ENCODE measurements at regions of chrX and their contacts with region 1.

Region 1: DNA sequence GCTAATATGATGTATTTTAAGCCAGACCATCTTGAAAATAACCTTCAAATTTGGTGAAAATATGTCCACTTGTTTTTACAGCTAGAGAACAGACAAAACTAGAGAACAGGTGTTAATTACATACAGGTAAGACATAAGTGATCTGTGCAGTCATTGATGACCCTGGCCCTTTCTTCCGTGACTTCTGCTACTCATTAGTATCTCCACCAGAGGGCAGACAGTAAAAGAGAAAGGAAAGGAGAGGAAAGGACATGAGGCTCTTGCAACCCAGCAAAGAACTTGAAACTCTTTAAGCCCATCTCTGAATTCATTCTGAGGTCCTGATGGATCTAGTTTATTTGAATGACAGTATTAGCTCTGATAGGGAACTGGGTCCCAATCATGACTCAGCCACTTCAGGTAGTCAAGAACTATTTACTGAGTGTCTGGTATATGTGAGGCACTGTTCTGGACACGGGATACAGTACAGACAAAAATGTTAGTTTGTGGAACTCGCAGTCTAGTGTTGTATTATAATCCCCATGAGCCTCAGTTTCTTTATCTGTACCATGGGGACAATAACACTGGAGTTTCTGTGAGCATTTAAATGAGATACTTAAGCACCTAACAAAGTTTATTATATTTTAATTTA is 121.0 kb upstream of the TEX13D start:
- DNase-seq: peak in 3 of 9 experiments; percentile 18 to 69 (median 55)
- ATAC-seq: peak; percentile 80
- H3K4me3 ChIP-seq: no peak overlapping the region
- H3K4me3 Mint-ChIP-seq: no peak overlapping the region
- H3K27ac ChIP-seq: no peak overlapping the region
- H3K27ac Mint-ChIP-seq: no peak overlapping the region
- H3K4me1 ChIP-seq: peaks cover 20% of the 10 kb centered on the region
- H3K4me1 Mint-ChIP-seq: peaks cover 42% of the 10 kb centered on the region
- H3K27me3 ChIP-seq: no peaks in the 10 kb centered on the region
- H3K27me3 Mint-ChIP-seq: no peaks in the 10 kb centered on the region
- CTCF ChIP-seq: peak; percentile 60

Region 2: GRCh38 chrX:124098089-124098488 is 113.3 kb before region 1 on chrX:
- CTCF ChIA-PET with region 1: no interaction called
- POLR2A ChIA-PET with region 1: no interaction called
- intact Hi-C with region 1: loop called in 1 of 2 experiments (anchors 10 kb)
- DNase-seq: peak in 2 of 9 experiments; percentile 35 to 53
- ATAC-seq: peak; percentile 46
- H3K4me3 ChIP-seq: no peak overlapping the region
- H3K4me3 Mint-ChIP-seq: no peak overlapping the region
- H3K27ac ChIP-seq: no peak overlapping the region
- H3K27ac Mint-ChIP-seq: no peak overlapping the region
- H3K4me1 ChIP-seq: no peaks in the 10 kb centered on the region
- H3K4me1 Mint-ChIP-seq: no peaks in the 10 kb centered on the region
- H3K27me3 ChIP-seq: no peaks in the 10 kb centered on the region
- H3K27me3 Mint-ChIP-seq: no peaks in the 10 kb centered on the region
- CTCF ChIP-seq: peak; percentile 60

Region 3: GRCh38 chrX:124239911-124240310 is 28.5 kb after region 1 on chrX:
- CTCF ChIA-PET with region 1: interaction called, 4 read pairs
- POLR2A ChIA-PET with region 1: no interaction called
- intact Hi-C with region 1: loop called in 1 of 2 experiments (anchors 1 kb)
- DNase-seq: peak in 3 of 9 experiments; percentile 27 to 75 (median 62)
- ATAC-seq: peak; percentile 72
- H3K4me3 ChIP-seq: peak overlapping the region in 1 of 2 experiments; percentile 9
- H3K4me3 Mint-ChIP-seq: peak overlapping the region; percentile 68
- H3K27ac ChIP-seq: peak overlapping the region in 1 of 2 experiments; percentile 56
- H3K27ac Mint-ChIP-seq: peak overlapping the region; percentile 77
- H3K4me1 ChIP-seq: peaks cover 6% of the 10 kb centered on the region
- H3K4me1 Mint-ChIP-seq: peaks cover 34% of the 10 kb centered on the region
- H3K27me3 ChIP-seq: no peaks in the 10 kb centered on the region
- H3K27me3 Mint-ChIP-seq: no peaks in the 10 kb centered on the region
- CTCF ChIP-seq: no peak

Region 4: DNA sequence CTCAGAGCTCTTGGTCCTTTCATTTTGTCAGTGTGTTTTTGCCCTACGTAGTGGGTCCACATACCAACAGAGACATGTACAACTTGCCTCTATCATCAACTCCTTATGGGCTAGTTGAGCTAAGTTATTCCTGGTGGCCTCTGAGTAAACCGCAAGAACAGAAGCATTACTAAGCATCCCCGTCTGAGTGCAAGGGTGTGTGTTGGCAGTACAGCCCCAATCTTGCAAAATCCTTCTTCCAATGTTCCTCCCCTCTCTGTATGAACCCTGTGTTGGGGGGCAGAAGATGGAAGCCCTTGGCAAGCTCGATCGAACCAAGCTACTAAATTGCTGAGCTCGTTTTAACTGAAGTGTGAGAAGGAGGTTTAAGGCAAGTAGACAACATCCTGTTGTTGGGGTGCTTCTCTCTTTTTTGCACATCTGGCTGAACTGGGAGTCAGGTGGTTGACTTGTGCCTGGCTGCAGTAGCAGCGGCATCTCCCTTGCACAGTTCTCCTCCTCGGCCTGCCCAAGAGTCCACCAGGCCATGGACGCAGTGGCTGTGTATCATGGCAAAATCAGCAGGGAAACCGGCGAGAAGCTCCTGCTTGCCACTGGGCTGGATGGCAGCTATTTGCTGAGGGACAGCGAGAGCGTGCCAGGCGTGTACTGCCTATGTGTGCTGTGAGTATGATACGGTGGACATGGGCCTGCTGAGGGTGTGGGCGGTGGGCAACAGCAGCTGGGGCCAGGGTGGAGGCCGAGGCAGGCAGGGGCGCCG is 134.9 kb after region 1 on chrX and contains the start of gene SH2D1A:
- CTCF ChIA-PET with region 1: interaction called, 3 read pairs
- POLR2A ChIA-PET with region 1: interaction called, 16 read pairs
- intact Hi-C with region 1: loop called in 1 of 2 experiments (anchors 5 kb)
- DNase-seq: peak in 7 of 9 experiments; percentile 7 to 74 (median 32)
- ATAC-seq: peak; percentile 35
- H3K4me3 ChIP-seq: peak within 1 kb of the TSS; percentile 61 to 62
- H3K4me3 Mint-ChIP-seq: peak within 1 kb of the TSS; percentile 96
- H3K27ac ChIP-seq: peak within 1 kb of the TSS; percentile 70 to 84
- H3K27ac Mint-ChIP-seq: peak within 1 kb of the TSS; percentile 98
- H3K4me1 ChIP-seq: peaks cover 50% of the 10 kb centered on the region
- H3K4me1 Mint-ChIP-seq: peaks cover 49% of the 10 kb centered on the region
- H3K27me3 ChIP-seq: no peaks in the 10 kb centered on the region
- H3K27me3 Mint-ChIP-seq: no peaks in the 10 kb centered on the region
- CTCF ChIP-seq: no peak
- total RNA-seq, gene SH2D1A: 44.4 to 50.3 TPM

Region 5: GRCh38 chrX:124358800-124359383 is 147.5 kb after region 1 on chrX:
- CTCF ChIA-PET with region 1: no interaction called
- POLR2A ChIA-PET with region 1: interaction called, 3 read pairs
- intact Hi-C with region 1: loop called in 1 of 2 experiments (anchors 5 kb)
- DNase-seq: peak in 2 of 9 experiments; percentile 43 to 59
- ATAC-seq: peak; percentile 67
- H3K4me3 ChIP-seq: peak overlapping the region in 1 of 2 experiments; percentile 10
- H3K4me3 Mint-ChIP-seq: peak overlapping the region; percentile 69
- H3K27ac ChIP-seq: peak overlapping the region in 1 of 2 experiments; percentile 70
- H3K27ac Mint-ChIP-seq: peak overlapping the region; percentile 88
- H3K4me1 ChIP-seq: peaks cover 38% of the 10 kb centered on the region
- H3K4me1 Mint-ChIP-seq: peaks cover 60% of the 10 kb centered on the region
- H3K27me3 ChIP-seq: no peaks in the 10 kb centered on the region
- H3K27me3 Mint-ChIP-seq: no peaks in the 10 kb centered on the region
- CTCF ChIP-seq: no peak

Region 6: GRCh38 chrX:124369722-124370121 is 158.3 kb after region 1 on chrX:
- CTCF ChIA-PET with region 1: interaction called, 3 read pairs
- POLR2A ChIA-PET with region 1: interaction called, 3 read pairs
- intact Hi-C with region 1: loop called (anchors 5 kb)
- DNase-seq: no peak
- ATAC-seq: no peak
- H3K4me3 ChIP-seq: no peak overlapping the region
- H3K4me3 Mint-ChIP-seq: no peak overlapping the region
- H3K27ac ChIP-seq: peak overlapping the region in 1 of 2 experiments; percentile 29
- H3K27ac Mint-ChIP-seq: peak overlapping the region; percentile 76
- H3K4me1 ChIP-seq: peaks cover 8% of the 10 kb centered on the region
- H3K4me1 Mint-ChIP-seq: peaks cover 47% of the 10 kb centered on the region
- H3K27me3 ChIP-seq: no peaks in the 10 kb centered on the region
- H3K27me3 Mint-ChIP-seq: no peaks in the 10 kb centered on the region
- CTCF ChIP-seq: no peak

Region 7: DNA sequence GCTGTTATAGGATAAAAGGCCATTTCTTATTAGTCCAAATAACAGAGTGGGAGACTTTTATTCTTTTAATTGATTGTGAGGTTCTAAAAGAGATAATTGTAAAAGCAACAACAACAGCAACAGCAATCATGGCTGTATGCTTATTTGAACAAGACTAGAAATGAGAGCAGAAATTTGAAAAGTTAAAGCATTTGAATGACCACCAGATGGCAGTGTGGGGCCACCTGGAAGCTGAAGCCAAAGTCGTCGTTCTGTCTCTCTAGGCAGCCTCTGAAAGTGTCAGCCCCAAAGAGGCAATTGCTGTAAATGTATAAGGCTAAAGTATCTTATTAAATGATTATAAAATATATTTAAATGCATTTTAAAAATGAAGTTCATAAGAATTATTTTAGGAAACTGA is 177.1 kb after region 1 on chrX:
- CTCF ChIA-PET with region 1: interaction called, 5 read pairs
- POLR2A ChIA-PET with region 1: no interaction called
- intact Hi-C with region 1: loop called in 1 of 2 experiments (anchors 5 kb)
- DNase-seq: peak; percentile 3 to 77 (median 56)
- ATAC-seq: peak; percentile 67
- H3K4me3 ChIP-seq: no peak overlapping the region
- H3K4me3 Mint-ChIP-seq: no peak overlapping the region
- H3K27ac ChIP-seq: no peak overlapping the region
- H3K27ac Mint-ChIP-seq: no peak overlapping the region
- H3K4me1 ChIP-seq: no peaks in the 10 kb centered on the region
- H3K4me1 Mint-ChIP-seq: peaks cover 9% of the 10 kb centered on the region
- H3K27me3 ChIP-seq: no peaks in the 10 kb centered on the region
- H3K27me3 Mint-ChIP-seq: no peaks in the 10 kb centered on the region
- CTCF ChIP-seq: peak; percentile 65

Region 8: DNA sequence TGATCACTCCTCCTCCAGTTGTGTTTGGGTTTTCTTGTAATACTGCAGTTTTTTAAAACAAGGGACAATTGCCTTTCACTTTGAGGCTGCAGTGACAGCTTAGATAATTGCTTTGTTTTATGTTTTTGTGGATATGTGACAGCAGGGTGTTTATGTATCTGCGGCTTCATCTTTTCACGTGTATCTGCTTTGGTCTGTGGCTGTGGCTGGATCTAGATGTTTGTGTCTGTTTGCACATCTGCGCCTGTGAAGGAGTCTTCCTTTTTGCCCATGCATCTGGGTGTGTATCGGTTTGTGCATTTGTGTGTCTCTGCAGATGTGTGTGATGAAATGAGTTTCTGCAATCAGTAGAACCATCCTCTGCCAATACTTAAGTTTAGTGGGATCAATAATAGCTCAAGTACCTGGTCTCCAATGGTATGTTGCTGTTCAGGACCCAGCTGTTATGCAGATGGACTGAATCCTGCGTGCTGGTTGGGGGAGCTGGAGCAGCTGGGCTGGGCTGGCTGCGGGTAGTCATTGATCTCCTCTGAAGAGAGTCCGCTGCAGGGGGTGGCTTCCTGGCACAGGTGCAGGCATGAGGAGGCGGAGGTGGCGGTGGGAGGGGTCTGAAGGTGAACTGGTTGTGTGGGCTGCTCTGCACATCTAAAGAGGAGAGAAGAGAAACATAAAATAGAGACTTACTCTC is 525.3 kb after region 1 on chrX:
- CTCF ChIA-PET with region 1: no interaction called
- POLR2A ChIA-PET with region 1: no interaction called
- intact Hi-C with region 1: no loop called
- DNase-seq: peak; percentile 18 to 79 (median 65)
- ATAC-seq: peak; percentile 88
- H3K4me3 ChIP-seq: peak overlapping the region in 1 of 2 experiments; percentile 20
- H3K4me3 Mint-ChIP-seq: peak overlapping the region; percentile 73
- H3K27ac ChIP-seq: peak overlapping the region in 1 of 2 experiments; percentile 26
- H3K27ac Mint-ChIP-seq: peak overlapping the region; percentile 91
- H3K4me1 ChIP-seq: peaks cover 22% of the 10 kb centered on the region
- H3K4me1 Mint-ChIP-seq: peaks cover 52% of the 10 kb centered on the region
- H3K27me3 ChIP-seq: no peaks in the 10 kb centered on the region
- H3K27me3 Mint-ChIP-seq: no peaks in the 10 kb centered on the region
- CTCF ChIP-seq: no peak